Activated T-helper 2 cell treated with anti-CD3 and anti-CD28 coated beads, Interferon-gamma antibody, Interleukin-2, Interleukin-4, amounts not matched to agents 10 μg/mL and 5 μg/mL and 100 μg/mL, durations not matched to agents 14 hours and 24 hours and 36 hours (primary cell): ENCODE measurements at regions of chr1 and their contacts with region 1.

Region 1: GRCh38 chr1:235984041-235984825 is 80.7 kb downstream of the NID1 start:
- DNase-seq: no peak
- H3K4me3 Mint-ChIP-seq: no peak overlapping the region
- H3K27ac Mint-ChIP-seq: no peak overlapping the region
- H3K4me1 Mint-ChIP-seq: peaks cover 2% of the 10 kb centered on the region
- H3K27me3 Mint-ChIP-seq: peaks cover 18% of the 10 kb centered on the region

Region 2: DNA sequence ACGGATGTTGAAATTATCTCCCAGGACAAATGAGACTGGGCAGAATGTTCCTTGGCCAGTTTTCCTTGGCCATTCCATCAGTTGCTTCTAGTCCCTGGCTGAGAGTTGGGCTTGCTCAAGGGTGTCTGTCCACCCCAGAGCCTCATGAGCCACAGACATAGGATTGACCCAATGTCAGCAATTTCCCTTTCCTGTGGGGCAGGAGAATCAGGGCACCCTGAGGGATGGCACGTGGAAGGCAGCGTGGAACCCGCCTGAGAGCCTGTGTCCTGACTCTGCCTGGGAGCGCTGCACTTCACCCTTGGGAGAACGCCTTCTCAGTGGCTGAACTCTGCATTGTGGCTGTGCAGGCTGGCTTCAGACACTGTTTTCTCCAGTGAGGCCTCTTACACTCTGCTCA is 408.6 kb before region 1 on chr1:
- intact Hi-C with region 1: loop called (anchors 5 kb)
- DNase-seq: no peak
- H3K4me3 Mint-ChIP-seq: no peak overlapping the region
- H3K27ac Mint-ChIP-seq: no peak overlapping the region
- H3K4me1 Mint-ChIP-seq: no peaks in the 10 kb centered on the region
- H3K27me3 Mint-ChIP-seq: no peaks in the 10 kb centered on the region

Region 3: DNA sequence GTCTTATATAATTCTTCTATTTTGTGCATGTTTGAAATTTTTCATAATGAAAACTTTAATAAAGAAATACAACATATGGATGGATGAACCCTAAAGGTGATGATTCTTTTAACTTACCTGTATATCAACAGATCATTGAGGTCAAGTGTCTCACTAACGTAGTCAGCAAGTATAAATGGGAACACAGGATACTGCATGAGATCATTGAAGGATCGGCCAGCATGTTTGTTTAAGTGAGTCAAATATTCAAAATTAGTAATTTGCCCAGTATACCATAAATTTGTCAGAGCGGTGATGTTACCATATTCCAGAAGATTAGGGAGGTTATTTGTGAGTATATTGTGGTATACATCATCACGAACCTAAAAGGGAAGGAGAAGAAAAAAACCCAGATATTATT is 263.7 kb before region 1 on chr1:
- intact Hi-C with region 1: no loop called
- DNase-seq: no peak
- H3K4me3 Mint-ChIP-seq: no peak overlapping the region
- H3K27ac Mint-ChIP-seq: no peak overlapping the region
- H3K4me1 Mint-ChIP-seq: no peaks in the 10 kb centered on the region
- H3K27me3 Mint-ChIP-seq: no peaks in the 10 kb centered on the region

Region 4: GRCh38 chr1:236072001-236072400 is 87.8 kb after region 1 on chr1:
- intact Hi-C with region 1: no loop called
- DNase-seq: no peak
- H3K4me3 Mint-ChIP-seq: no peak overlapping the region
- H3K27ac Mint-ChIP-seq: no peak overlapping the region
- H3K4me1 Mint-ChIP-seq: peaks cover 5% of the 10 kb centered on the region
- H3K27me3 Mint-ChIP-seq: peaks cover 33% of the 10 kb centered on the region